ENCODE measurements at regions of chr6 and their contacts with region 1.

Region 1: DNA sequence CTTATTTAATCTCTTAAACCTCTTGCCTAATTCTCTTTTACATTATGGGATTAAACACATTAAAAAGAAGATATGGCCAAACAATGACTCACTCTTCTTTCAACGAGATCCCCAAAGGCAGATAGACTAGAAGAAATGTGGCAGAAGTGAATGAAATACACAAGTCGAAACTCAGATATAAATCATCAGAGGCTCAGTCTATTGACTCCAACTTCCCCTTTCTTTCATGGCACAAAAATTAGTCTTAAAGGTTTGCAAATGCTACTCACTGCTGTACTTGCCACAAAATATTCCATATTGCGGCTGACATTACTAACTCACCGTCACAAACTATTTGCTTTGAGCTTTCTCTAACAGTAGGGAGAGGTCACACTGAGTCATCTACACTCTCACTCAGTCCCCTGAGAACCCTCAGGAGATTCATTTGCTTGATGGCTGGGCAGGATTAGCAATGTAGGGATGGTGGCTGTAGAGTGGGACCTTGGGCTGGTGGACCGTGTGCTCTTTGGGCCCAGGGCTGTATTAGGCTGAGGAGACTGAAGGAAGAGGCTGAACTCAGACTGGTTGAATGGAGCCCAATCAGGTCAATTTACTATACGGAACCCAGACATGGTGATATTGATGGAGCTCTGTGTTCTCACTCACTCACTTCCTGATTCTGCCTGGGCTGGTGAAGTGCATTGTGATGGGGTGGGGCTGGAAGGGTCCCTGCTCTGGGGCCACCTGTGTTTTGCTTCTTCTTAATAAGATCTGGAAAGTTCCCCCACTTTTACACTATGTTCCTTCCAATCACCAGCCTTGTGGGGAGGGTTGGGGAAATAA is 42.8 kb upstream of the UBR2 start:
- DNase-seq: no peak
- H3K4me3 Mint-ChIP-seq: no peak overlapping the region
- H3K27ac Mint-ChIP-seq: peak overlapping the region; percentile 90
- H3K4me1 Mint-ChIP-seq: peaks cover 18% of the 10 kb centered on the region
- H3K27me3 Mint-ChIP-seq: no peaks in the 10 kb centered on the region

Region 2: DNA sequence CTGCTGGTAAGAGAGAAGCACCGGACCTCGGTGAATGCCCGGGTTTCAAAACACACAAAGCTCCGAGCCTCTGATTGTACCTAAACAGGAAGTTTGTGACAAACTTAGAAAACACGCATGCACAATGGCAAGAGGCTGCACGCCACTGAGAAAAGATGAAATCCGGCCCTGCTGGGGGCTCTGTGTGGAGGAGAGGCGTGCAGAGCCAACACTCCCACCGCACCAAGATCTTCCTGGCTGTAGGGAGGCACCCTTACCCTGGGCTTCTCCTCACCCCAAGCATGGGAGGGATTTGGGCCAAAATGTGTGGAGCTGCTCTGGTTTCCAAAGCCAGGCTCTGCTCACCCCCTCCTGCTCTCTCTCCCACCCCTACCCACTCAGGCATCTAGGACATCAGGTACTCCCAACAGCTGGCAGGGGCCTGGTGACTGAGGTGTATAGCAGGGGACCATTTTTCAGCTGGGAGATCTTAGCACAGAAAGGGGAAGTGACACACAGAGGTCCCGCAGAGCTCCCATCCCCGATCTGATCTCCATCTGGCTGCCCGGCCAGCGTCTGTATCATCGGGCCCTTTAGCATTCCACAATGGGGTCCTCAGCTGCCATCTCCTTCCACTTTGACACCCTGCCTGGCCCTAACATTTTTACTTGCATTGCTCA is 153.5 kb before region 1 on chr6:
- intact Hi-C with region 1: loop called (anchors 5 kb)
- DNase-seq: no peak
- H3K4me3 Mint-ChIP-seq: peak overlapping the region; percentile 47
- H3K27ac Mint-ChIP-seq: peak overlapping the region; percentile 84
- H3K4me1 Mint-ChIP-seq: peaks cover 61% of the 10 kb centered on the region
- H3K27me3 Mint-ChIP-seq: no peaks in the 10 kb centered on the region

Region 3: GRCh38 chr6:42390228-42390934 is 130.6 kb before region 1 on chr6:
- intact Hi-C with region 1: loop called (anchors 2 kb)
- DNase-seq: peak; percentile 50
- H3K4me3 Mint-ChIP-seq: peak overlapping the region; percentile 76
- H3K27ac Mint-ChIP-seq: peak overlapping the region; percentile 99
- H3K4me1 Mint-ChIP-seq: peaks cover 90% of the 10 kb centered on the region
- H3K27me3 Mint-ChIP-seq: no peaks in the 10 kb centered on the region

Region 4: DNA sequence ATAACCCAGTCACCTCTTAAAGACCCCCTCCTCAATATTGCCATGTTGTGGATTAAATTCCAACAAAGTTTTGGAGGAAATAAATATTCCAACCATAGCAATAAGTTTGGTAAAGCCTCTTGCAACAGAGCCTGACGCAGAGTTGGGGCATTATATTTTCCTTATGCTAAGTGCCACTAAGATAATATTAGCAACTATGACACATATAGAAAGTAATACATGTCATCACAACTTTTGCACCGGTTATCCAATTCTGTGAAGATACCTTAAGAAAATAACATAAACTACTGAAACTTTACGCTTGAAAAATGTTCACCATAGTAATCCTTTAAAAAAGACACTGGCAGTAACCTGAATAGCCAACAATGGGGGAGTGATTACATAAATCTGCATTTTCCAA is 17.1 kb before region 1 on chr6:
- intact Hi-C with region 1: loop called (anchors 1 kb)
- DNase-seq: no peak
- H3K4me3 Mint-ChIP-seq: no peak overlapping the region
- H3K27ac Mint-ChIP-seq: no peak overlapping the region
- H3K4me1 Mint-ChIP-seq: peaks cover 17% of the 10 kb centered on the region
- H3K27me3 Mint-ChIP-seq: peaks cover 5% of the 10 kb centered on the region

Measured in activated T-helper 2 cell treated with anti-CD3 and anti-CD28 coated beads, Interferon-gamma antibody, Interleukin-2, Interleukin-4, amounts not matched to agents 10 μg/mL and 5 μg/mL and 100 μg/mL, durations not matched to agents 14 hours and 24 hours and 36 hours (primary cell).